ENCODE measurements at regions of chr5 and their contacts with region 1.

Region 1: GRCh38 chr5:112921833-112922817 is at the start of gene REEP5:
- DNase-seq: peak; percentile 60 to 97 (median 81)

Region 2: GRCh38 chr5:112551419-112552032 is 370.6 kb before region 1 on chr5:
- intact Hi-C with region 1: loop called (anchors 2 kb)
- DNase-seq: peak in 2 of 10 donors; percentile 20 to 45

Region 3: GRCh38 chr5:112860929-112861637 is 61.0 kb before region 1 on chr5 and contains the start of gene SRP19:
- intact Hi-C with region 1: loop called (anchors 2 kb)
- DNase-seq: peak; percentile 92 to 99 (median 96)

Region 4: GRCh38 chr5:112976432-112977309 is 54.5 kb after region 1 on chr5 and contains the start of gene DCP2:
- intact Hi-C with region 1: loop called (anchors 5 kb)
- DNase-seq: peak; percentile 86 to 99 (median 91)

Region 5: GRCh38 chr5:113371721-113372196 is 449.6 kb after region 1 on chr5:
- intact Hi-C with region 1: no loop called
- DNase-seq: no peak

Measured in posterior cingulate gyrus (tissue), 11 donors.